A549 (cell line): ENCODE measurements at regions of chr21 and their contacts with region 1.

Region 1: DNA sequence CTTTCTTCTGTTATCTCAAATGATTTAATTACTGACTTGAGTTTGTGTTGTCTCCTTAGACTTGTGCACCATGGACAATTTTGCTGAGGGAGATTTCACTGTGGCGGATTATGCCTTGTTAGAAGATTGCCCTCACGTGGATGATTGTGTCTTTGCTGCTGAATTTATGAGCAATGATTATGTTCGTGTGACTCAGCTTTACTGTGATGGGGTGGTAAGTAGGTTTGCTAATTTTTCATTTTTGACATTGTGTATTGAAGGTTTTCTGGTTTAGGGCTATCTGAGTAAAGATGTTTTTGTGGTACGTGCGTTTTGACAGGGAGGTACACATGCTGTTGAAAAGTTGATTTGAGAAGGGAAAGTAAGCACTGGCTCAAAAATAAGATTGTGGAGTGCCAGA is 14.1 kb downstream of the TTC3 start:
- DNase-seq: peak in 1 of 2 experiments; percentile 66
- ATAC-seq: peak in 1 of 2 experiments; percentile 79; a peak in 4 of 6 replicates
- H3K4me3 ChIP-seq: no peak overlapping the region
- H3K27ac ChIP-seq: peak overlapping the region; percentile 7 to 22; a peak in 2 of 6 replicates
- H3K4me1 ChIP-seq: peaks cover 15% of the 10 kb centered on the region
- CTCF ChIP-seq: peak; percentile 53
- EP300 ChIP-seq: no peak
- POLR2A ChIP-seq: no peak
- RAD21 ChIP-seq: peak; percentile 53 to 65

Region 2: GRCh38 chr21:36976882-36977651 is 110.1 kb before region 1 on chr21:
- CTCF ChIA-PET with region 1: interaction called, 38 read pairs
- POLR2A ChIA-PET with region 1: no interaction called
- DNase-seq: peak; percentile 23 to 84
- ATAC-seq: peak; percentile 82 to 88
- H3K4me3 ChIP-seq: no peak overlapping the region
- H3K27ac ChIP-seq: peak overlapping the region; percentile 10 to 69; a peak in 3 of 6 replicates
- H3K4me1 ChIP-seq: peaks cover 9% of the 10 kb centered on the region; the same call in 1 of the 3 replicates
- CTCF ChIP-seq: peak; percentile 83
- EP300 ChIP-seq: no peak
- POLR2A ChIP-seq: no peak
- RAD21 ChIP-seq: peak; percentile 71 to 79

Region 3: DNA sequence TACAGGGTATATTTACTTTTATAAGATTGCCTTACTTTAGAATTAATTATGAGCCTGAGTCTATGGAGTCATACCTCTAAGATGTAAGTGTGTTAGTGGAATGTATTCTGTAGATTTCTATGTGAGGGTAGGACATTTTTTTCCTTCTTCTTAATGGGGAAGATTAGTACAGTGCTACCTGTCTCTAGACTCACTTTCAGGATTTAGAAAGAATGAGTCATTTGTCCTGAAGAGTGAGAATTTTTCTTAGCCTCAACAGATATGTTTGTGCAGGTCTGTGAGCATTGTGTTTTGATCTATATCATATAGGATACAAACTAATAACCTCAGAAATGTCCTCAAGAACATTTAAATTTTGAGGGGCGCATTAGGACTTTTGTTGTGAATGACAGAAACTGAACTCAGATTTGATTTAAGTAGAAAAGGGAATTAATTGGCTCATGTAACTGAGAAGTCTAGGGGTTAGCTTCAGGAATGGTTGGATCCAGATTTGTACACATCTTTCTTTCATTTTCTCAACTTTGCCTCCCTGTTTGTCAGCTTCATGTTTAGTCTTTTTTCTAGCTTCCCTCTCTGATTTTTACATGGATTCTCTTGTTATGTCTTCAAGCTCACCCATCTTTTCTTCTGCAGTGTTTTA is 31.1 kb after region 1 on chr21:
- CTCF ChIA-PET with region 1: no interaction called
- POLR2A ChIA-PET with region 1: no interaction called
- DNase-seq: no peak
- ATAC-seq: no peak
- H3K4me3 ChIP-seq: no peak overlapping the region
- H3K27ac ChIP-seq: no peak overlapping the region
- H3K4me1 ChIP-seq: peaks cover 6% of the 10 kb centered on the region; the same call in 2 of the 3 replicates
- CTCF ChIP-seq: no peak
- EP300 ChIP-seq: no peak
- POLR2A ChIP-seq: no peak
- RAD21 ChIP-seq: no peak